ENCODE measurements at regions of chr10 and their contacts with region 1.

Region 1: DNA sequence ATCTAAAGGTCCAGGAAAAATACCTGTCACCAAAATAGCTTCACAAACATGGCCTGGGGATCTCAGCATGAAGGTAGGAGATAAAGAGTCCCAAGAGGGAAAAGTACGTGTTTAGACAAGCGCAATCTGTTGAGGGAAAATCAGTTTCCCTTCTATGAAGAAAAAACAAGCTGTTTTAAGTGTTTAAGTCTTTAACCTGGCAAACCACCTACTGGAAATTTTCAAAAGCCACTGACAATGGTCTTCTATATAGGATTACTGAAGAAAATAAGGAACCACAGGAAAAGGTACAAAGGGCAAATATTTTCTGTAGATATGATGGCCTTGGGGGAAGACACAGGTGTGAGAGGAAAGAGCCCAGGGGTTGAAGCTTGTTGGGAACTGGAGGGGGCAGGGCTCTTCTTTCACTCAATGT is 21.2 kb downstream of the ALDH18A1 start:
- DNase-seq: peak; percentile 96
- ATAC-seq: peak; percentile 81
- H3K4me3 ChIP-seq: no peak overlapping the region; a peak in 1 of 6 replicates
- H3K27ac ChIP-seq: peak overlapping the region; percentile 78
- H3K4me1 ChIP-seq: peaks cover 80% of the 10 kb centered on the region
- H3K27me3 ChIP-seq: no peaks in the 10 kb centered on the region
- CTCF ChIP-seq: no peak
- EP300 ChIP-seq: peak in 1 of 2 experiments; percentile 89; a peak in 2 of 4 replicates
- POLR2A ChIP-seq: no peak
- RAD21 ChIP-seq: no peak

Region 2: DNA sequence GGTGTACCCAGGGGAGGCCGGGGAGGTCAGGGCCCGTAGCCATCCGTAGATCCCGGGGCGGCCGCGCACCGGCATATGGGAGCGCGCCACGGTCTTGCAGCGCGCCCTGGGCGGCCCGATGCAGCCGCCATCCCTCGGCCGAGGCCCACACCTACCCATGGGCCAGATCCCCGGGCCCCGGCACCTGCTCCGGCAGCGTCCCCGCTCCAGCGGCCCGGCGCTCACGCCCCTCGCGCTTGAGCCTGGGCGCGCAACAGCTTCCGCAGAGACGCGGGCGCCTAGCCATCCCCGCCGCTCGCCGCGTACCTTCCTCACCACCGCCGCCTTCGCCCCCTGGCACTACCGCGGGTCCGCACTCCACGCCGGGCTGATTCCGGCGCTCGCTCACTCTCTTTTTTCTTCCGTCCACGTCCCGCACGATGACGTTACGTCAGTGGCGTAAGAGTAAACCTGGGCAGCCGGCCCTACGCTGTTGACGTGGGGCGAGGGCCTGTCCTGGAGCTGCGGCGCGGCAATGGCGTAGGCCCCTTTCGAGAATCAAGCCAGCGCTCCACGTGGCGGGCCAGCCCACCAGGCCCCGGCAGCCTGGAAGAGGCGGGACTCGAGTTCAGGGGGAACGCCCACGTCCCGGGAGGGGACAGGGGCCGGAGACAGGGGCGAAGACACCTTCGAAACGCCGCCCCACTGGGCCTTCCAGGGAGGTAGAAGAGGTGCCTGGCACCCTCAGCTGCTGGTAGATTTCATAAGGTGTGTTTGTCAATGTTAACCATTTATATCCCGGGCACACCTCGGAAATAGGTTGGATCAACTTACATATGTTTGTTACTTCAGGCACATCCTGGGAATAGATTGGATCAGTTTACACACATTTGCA is 21.2 kb after region 1 on chr10 and contains the start of gene ALDH18A1:
- CTCF ChIA-PET with region 1: no interaction called
- POLR2A ChIA-PET with region 1: interaction called, 9 read pairs
- in situ Hi-C with region 1: no loop called
- intact Hi-C with region 1: loop called (anchors 1 kb)
- DNase-seq: peak; percentile 86
- ATAC-seq: peak; percentile 90
- H3K4me3 ChIP-seq: peak within 1 kb of the TSS; percentile 75 to 90 (median 85)
- H3K27ac ChIP-seq: peak within 1 kb of the TSS; percentile 69
- H3K4me1 ChIP-seq: peaks cover 44% of the 10 kb centered on the region
- H3K27me3 ChIP-seq: no peaks in the 10 kb centered on the region; a peak in 1 of 5 replicates
- CTCF ChIP-seq: 0 out of 2 replicates have a peak, but pooled peaks have one; percentile 15
- EP300 ChIP-seq: no peak
- POLR2A ChIP-seq: peak; percentile 34 to 74; a peak in 3 of 4 replicates
- RAD21 ChIP-seq: 0 out of 2 replicates have a peak, but pooled peaks have one; percentile 16
- total RNA-seq, gene ALDH18A1: 98.4 and 263 TPM in 2 replicates